Activated naive CD4-positive, alpha-beta T cell treated with anti-CD3 and anti-CD28 coated beads, Interleukin-2, amount 10 ng/mL, durations not matched to agents 7 days and 5 days (primary cell): ENCODE measurements at regions of chr12 and their contacts with region 1.

Region 1: GRCh38 chr12:6470375-6471163 is at the start of gene VAMP1:
- DNase-seq: peak; percentile 100
- H3K4me3 Mint-ChIP-seq: peak within 1 kb of the TSS; percentile 94
- H3K27ac Mint-ChIP-seq: peak within 1 kb of the TSS; percentile 93
- H3K4me1 Mint-ChIP-seq: peaks cover 56% of the 10 kb centered on the region
- H3K27me3 Mint-ChIP-seq: peaks cover 24% of the 10 kb centered on the region

Region 2: DNA sequence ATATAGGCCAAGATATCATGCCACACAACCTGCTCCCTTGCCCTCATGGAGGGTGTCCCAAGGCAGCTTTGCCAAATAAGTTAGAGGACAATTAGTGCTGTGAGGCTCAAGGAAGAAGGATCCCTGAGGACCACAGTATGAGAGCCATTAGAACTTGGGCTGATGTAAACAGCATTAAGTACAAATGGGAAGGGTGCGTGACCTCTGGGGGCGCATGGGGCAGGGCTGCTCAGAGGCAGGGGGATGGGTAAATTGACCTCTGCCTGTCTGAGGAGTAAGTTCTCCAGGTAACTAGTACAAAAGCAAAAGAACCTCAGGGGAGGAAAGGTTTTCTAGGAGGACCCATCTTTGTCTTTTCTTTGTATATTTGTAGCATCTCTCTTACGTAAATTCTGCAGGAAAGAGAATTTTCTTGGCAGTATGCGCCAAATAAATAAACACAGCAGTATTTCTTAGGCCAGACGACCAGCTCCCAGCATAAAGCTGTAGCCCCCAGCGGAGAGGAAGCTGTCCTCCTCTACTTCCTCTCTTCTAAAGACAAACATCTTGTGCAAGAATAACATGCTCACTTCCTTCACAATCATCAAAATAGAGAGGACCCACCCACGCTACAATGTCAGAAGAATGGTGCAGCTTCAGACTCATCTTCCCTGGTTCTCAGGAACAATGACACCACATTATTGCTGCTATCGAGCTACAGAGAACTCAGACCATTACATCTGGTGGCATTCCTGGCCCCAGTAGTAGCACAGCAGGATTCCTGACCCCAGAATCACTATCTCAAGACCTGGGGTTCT is 329.7 kb before region 1 on chr12:
- CTCF ChIA-PET with region 1: no interaction called
- DNase-seq: peak; percentile 42
- H3K4me3 Mint-ChIP-seq: no peak overlapping the region
- H3K27ac Mint-ChIP-seq: peak overlapping the region; percentile 96
- H3K4me1 Mint-ChIP-seq: peaks cover 62% of the 10 kb centered on the region
- H3K27me3 Mint-ChIP-seq: peaks cover 12% of the 10 kb centered on the region

Region 3: GRCh38 chr12:6323340-6323994 is 147.1 kb before region 1 on chr12:
- CTCF ChIA-PET with region 1: interaction called, 19 read pairs
- DNase-seq: peak; percentile 49
- H3K4me3 Mint-ChIP-seq: peak overlapping the region; percentile 1
- H3K27ac Mint-ChIP-seq: peak overlapping the region; percentile 80
- H3K4me1 Mint-ChIP-seq: peaks cover 41% of the 10 kb centered on the region
- H3K27me3 Mint-ChIP-seq: peaks cover 10% of the 10 kb centered on the region

Region 4: GRCh38 chr12:6423267-6424007 is 47.1 kb before region 1 on chr12:
- CTCF ChIA-PET with region 1: interaction called, 231 read pairs
- DNase-seq: peak; percentile 86
- H3K4me3 Mint-ChIP-seq: no peak overlapping the region
- H3K27ac Mint-ChIP-seq: peak overlapping the region; percentile 65
- H3K4me1 Mint-ChIP-seq: peaks cover 48% of the 10 kb centered on the region
- H3K27me3 Mint-ChIP-seq: peaks cover 20% of the 10 kb centered on the region

Region 5: DNA sequence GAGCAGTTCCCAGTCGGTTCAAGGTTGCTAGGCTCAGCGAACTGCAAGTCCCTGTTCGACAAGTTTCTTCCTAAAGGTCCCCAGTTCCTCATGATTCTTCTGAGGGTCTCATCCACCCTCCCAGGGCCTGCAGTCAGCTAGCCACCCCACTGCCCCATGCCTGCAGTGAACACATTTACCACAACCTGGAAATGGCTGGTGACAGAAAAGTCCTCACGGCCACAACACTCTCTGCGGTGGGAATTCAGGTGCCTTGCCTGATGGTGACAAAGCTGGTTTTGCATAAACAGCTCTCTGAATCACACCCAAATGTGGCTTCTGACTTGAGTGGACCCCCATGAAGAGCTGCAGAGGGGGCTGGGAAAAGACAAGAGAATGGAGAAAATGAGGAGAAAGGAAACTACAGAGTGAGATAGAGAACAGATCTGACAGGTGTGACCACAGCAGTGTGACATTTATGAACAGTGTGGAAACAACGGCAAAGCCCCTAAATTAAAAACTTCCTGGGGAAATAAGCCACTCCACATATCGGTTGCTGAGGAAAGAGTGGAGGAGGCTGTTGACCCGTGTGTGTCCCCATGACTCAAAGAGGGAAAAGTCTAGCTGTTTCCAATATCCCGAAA is 27.1 kb before region 1 on chr12:
- CTCF ChIA-PET with region 1: interaction called, 63 read pairs
- DNase-seq: peak; percentile 26
- H3K4me3 Mint-ChIP-seq: peak overlapping the region; percentile 97
- H3K27ac Mint-ChIP-seq: peak overlapping the region; percentile 95
- H3K4me1 Mint-ChIP-seq: peaks cover 59% of the 10 kb centered on the region
- H3K27me3 Mint-ChIP-seq: no peaks in the 10 kb centered on the region

Region 6: DNA sequence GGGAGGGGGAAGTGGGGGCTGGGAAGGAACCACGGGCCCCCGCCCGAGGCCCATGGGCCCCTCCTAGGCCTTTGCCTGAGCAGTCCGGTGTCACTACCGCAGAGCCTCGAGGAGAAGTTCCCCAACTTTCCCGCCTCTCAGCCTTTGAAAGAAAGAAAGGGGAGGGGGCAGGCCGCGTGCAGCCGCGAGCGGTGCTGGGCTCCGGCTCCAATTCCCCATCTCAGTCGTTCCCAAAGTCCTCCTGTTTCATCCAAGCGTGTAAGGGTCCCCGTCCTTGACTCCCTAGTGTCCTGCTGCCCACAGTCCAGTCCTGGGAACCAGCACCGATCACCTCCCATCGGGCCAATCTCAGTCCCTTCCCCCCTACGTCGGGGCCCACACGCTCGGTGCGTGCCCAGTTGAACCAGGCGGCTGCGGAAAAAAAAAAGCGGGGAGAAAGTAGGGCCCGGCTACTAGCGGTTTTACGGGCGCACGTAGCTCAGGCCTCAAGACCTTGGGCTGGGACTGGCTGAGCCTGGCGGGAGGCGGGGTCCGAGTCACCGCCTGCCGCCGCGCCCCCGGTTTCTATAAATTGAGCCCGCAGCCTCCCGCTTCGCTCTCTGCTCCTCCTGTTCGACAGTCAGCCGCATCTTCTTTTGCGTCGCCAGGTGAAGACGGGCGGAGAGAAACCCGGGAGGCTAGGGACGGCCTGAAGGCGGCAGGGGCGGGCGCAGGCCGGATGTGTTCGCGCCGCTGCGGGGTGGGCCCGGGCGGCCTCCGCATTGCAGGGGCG is 63.5 kb after region 1 on chr12 and contains the start of gene GAPDH:
- CTCF ChIA-PET with region 1: interaction called, 10 read pairs
- DNase-seq: peak; percentile 93
- H3K4me3 Mint-ChIP-seq: peak within 1 kb of the TSS; percentile 98
- H3K27ac Mint-ChIP-seq: peak within 1 kb of the TSS; percentile 99
- H3K4me1 Mint-ChIP-seq: peaks cover 58% of the 10 kb centered on the region
- H3K27me3 Mint-ChIP-seq: peaks cover 9% of the 10 kb centered on the region